Mucosa of descending colon (tissue), 3 donors: ENCODE measurements at regions of chr3 and their contacts with region 1.

Region 1: DNA sequence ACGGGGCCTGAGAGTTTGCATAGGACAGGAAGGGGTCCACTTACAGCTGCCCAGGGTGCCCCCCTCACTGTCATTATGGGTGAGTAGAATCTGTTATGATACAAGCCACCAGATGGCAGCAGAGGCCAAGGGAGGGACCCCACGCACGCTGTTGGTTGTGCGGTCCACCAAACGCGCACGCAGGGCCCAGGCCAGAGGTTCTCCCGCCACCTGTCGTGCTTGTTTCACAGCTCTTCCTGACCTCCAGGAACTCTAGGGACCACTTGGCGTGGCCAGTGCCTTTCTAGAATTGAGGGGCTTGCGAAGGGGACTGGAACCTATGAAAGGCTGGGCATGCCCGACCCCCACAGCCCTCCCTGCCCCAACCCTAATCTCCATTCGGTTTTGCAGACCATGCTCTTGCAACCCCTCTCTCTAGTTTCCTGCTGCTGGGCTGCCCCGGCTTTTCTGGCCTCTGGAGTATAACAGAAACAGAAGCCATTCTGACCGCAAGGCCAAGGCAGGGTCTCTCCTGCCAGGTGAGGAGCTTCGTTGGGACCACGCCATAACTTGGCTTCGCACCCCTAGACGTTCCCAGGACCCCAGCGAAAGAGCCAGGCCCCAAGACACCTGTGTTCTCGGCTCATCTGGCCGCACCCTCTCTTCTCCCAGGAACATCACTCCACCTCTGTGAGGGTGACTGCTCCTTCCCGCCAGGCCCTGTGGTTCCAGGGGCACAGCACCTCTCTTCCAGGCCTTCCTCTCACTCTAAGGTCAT is 46.0 kb downstream of the ALDH1L1 start:
- DNase-seq: peak; percentile 54 to 74 (median 55)
- ATAC-seq: peak; percentile 67
- H3K4me3 ChIP-seq: no peak overlapping the region
- H3K4me1 ChIP-seq: no peaks in the 10 kb centered on the region
- CTCF ChIP-seq: peak; percentile 41

Region 2: DNA sequence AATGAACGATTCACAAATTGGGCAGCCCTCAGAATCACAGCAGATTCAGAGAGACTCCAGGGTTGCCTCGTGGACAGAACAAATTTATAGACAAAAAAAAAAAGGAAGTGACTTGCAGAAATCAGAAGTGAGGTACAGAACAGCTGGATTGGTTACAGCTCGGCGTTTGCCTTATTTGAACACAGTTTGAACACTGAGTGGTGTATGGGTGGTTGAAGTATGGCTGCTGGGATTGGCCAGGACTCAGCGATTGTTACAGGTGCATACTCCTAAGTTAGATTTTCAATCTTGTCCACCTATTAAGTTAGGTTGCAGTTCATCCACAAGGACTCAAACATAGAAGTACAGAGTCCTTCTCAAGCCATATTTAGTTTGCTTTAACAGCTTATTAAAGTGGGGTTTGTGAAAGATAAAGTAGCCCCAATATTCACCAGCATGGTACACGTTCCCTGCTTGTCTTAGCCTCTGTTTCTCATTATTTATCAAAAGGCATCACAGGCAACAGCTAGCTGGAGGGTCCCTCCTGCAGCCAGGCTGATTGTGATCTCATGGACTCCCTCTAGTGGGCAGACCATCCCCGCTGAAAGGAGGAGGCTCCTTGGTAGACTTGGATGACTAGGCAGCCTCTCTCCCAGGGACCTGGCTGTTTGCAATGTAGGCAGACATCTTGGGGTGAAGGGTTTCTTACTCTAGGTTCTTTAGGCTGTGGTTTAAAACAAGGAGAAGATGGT is 63.6 kb after region 1 on chr3:
- intact Hi-C with region 1: loop called in 1 of 2 experiments (anchors 10 kb)
- DNase-seq: peak in 2 of 3 donors; percentile 62 to 81
- ATAC-seq: peak; percentile 83
- H3K4me3 ChIP-seq: no peak overlapping the region
- H3K4me1 ChIP-seq: no peaks in the 10 kb centered on the region
- CTCF ChIP-seq: peak; percentile 54

Region 3: GRCh38 chr3:126394575-126395228 is 260.3 kb after region 1 on chr3 and contains the start of gene CFAP100:
- intact Hi-C with region 1: loop called in 1 of 2 experiments (anchors 10 kb)
- DNase-seq: peak in 1 of 3 donors; percentile 17
- ATAC-seq: peak; percentile 27
- H3K4me3 ChIP-seq: no peak within 1 kb of the TSS
- H3K4me1 ChIP-seq: no peaks in the 10 kb centered on the region
- CTCF ChIP-seq: no peak
- total RNA-seq, gene CFAP100: not detected